BJ (cell line): ENCODE measurements at regions of chr1 and their contacts with region 1.

Region 1: DNA sequence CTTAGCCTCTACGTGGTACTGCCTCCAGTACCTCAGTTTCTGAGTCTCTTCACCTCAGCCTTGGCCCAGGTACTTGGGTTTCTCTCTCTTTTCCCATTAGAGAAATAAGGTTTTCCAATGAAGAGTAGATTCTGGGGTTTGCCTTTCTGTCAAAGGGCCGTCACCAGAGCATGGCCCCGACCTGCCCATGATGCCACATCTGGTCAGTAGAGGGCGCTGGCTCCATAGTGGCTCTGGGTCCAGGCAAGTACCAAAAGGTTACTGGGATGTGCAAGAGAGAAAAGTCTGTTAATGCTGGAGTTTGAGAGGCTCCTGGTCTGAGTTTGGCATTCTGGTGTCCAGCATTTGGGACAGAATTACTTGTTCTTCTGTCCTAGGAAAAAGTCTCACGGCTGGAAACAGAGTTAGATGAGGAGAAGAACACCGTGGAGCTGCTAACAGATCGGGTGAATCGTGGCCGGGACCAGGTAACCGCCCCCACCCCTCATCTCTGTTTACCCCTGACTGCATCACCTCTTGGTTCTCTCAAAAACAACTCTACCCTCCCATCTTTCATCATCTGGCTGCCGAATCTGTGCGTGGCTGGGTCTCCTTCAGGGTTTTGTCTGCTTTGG is 5.3 kb upstream of the TUFT1 start:
- DNase-seq: no peak
- H3K4me3 ChIP-seq: no peak overlapping the region
- H3K27me3 ChIP-seq: peaks cover 2% of the 10 kb centered on the region; the same call in 1 of the 2 replicates
- CTCF ChIP-seq: peak; percentile 98

Region 2: DNA sequence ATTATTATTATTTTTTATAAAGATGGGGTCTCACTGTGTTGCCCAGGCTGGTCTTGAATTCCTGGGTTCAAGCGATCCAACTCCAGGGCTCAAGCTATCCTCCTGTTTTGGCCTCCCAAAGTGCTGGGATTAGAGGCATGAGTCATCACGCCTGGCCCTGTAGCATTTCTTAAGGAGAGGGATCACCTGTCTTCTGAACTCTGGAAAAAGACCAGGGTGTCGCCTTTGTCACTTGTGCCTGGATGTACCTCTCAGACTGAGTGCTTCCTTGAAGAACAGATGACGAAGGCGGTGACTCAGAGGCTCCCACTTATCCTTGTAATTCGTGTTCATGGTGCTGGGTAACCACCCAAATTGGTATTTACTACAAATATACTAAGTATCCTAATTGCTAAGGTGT is 25.9 kb before region 1 on chr1:
- CTCF ChIA-PET with region 1: no interaction called
- POLR2A ChIA-PET with region 1: no interaction called
- DNase-seq: no peak
- H3K4me3 ChIP-seq: no peak overlapping the region
- H3K27me3 ChIP-seq: peaks cover 17% of the 10 kb centered on the region
- CTCF ChIP-seq: no peak

Region 3: DNA sequence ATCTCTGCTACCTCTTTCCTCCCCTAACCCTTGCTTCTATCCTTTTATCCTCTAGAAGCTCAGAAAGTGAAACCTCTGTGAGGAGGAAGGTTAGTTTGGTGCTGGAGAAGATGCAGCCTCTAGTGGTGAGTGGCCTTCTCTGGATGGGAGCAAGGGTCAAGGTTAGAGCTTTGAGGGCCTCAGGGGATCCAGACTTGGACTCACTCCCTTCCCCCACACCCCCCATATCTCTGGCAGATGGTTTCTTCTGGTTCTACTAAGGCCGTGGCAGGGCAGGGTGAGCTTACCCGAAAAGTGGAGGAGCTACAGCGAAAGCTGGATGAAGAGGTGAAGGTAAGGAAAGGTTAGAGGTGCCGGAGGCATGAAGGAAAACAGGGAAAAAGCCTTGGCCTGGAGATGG is 14.4 kb before region 1 on chr1:
- CTCF ChIA-PET with region 1: interaction called, 24 read pairs
- POLR2A ChIA-PET with region 1: no interaction called
- DNase-seq: no peak
- H3K4me3 ChIP-seq: no peak overlapping the region
- H3K27me3 ChIP-seq: peaks cover 5% of the 10 kb centered on the region
- CTCF ChIP-seq: peak; percentile 23; the same call in 1 of the 2 replicates